ENCODE measurements at regions of chr4 and their contacts with region 1.

Region 1: DNA sequence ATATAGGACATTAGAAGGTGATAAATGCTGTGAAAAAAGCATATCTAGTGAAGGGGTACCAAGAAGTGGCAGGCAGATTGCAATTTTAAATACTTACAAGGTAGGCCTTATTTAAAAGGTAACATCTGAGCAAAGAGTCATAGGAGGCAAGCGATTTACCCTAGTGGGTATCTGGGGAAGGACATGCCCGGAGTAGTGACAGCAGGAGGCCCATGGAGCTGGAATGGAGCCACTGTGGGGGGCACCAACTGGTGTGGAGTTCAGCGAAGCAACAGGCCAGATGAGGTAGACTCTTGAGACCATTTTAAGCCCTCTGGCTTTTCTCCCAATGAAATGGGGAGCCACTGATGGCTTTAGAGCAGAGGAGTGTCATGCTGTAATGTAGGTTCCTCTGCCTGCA is 37.3 kb downstream of the SEC24D start:
- DNase-seq: no peak
- H3K4me3 ChIP-seq: no peak overlapping the region
- H3K27ac ChIP-seq: no peak overlapping the region
- H3K4me1 ChIP-seq: peaks cover 13% of the 10 kb centered on the region
- H3K27me3 ChIP-seq: no peaks in the 10 kb centered on the region
- CTCF ChIP-seq: no peak
- POLR2A ChIP-seq: no peak

Region 2: DNA sequence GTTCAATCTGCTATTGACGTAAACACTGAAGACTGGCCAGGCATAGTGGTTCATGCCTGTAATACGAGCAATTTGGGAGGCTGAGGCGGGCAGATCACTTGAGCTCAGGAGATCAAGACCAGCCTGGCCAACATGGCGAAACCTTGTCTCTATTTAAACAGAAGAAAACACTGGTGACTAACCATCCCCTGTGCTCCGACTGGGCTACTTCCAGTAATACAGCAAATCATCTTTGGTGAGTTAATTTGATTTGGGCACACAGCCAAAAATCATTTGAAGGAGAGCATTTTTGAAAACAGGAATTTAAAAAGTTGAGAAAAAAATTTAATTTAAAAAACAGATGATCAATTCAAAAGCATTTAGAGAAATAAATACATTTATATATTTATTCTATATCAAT is 14.8 kb before region 1 on chr4:
- CTCF ChIA-PET with region 1: interaction called, 5 read pairs
- POLR2A ChIA-PET with region 1: no interaction called
- dilution Hi-C with region 1: no loop called
- intact Hi-C with region 1: loop called (anchors 1 kb)
- DNase-seq: no peak
- H3K4me3 ChIP-seq: no peak overlapping the region
- H3K27ac ChIP-seq: no peak overlapping the region
- H3K4me1 ChIP-seq: peaks cover 2% of the 10 kb centered on the region
- H3K27me3 ChIP-seq: no peaks in the 10 kb centered on the region
- CTCF ChIP-seq: no peak
- POLR2A ChIP-seq: no peak

Measured in endothelial cell of umbilical vein (primary cell).